Heart left ventricle (tissue), 16 donors: ENCODE measurements at regions of chr15 and their contacts with region 1.

Region 1: DNA sequence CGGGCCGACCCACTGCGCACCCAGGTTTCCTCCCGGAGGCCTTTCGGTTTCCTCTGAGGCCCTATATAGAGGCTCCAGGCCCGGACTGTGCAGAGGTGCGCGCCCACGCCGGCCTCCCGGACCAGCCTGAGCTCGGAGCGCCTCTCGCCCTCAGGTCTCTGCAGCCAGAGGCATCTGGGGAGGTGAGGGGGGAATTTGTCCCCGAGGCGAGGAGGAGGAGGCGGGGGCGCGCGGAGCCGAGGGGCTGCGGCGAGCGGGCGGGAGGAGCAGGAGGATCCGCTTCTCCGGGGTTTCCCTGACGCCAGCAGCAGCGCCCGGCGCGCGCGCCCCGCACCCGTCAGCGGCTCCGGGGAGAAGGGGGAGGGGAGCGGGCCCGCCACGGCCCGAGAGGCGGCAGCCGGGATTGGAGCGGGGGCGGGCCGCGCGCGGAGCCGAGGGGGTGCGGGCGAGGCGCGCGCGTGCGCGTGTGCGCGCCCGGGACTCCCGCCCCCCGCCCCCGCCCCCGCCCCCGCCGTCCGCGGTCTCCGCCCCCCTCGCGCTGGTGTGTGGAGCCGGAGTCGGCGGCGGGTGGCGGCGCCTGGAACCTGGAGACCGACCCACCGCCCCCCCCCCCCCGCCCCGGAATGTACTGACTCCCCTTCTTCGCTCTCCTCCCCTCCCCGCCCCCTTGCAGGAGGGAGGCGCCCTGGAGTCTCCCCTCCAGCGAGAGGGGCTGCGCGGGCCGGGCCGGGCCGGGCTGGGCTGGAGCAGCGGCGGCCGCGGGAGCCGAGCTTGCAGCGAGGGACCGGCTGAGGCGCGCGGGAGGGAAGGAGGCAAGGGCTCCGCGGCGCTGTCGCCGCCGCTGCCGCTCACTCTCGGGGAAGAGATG is at the start of gene NEO1:
- DNase-seq: peak; percentile 88 to 93 (median 88)
- ATAC-seq: peak; percentile 84 to 96 (median 96)
- H3K4me3 ChIP-seq: peak within 1 kb of the TSS; percentile 73 to 97 (median 82)
- H3K27ac ChIP-seq: peak within 1 kb of the TSS; percentile 74 to 97 (median 92)
- H3K4me1 ChIP-seq: peaks cover 0 to 19% (median 8%) of the 10 kb centered on the region in 12 donors
- H3K27me3 ChIP-seq: peaks cover 0 to 37% (median 0%) of the 10 kb centered on the region in 9 donors
- CTCF ChIP-seq: no peak
- POLR2A ChIP-seq: peak in 1 of 2 donors; percentile 45
- total RNA-seq, gene NEO1: 10.7 to 31.5 (median 13.5) TPM

Region 2: GRCh38 chr15:72783563-72784237 is 268.3 kb before region 1 on chr15 and contains the start of gene ADPGK:
- intact Hi-C with region 1: loop called in 2 of 10 experiments (anchors 2 to 10 kb)
- DNase-seq: peak; percentile 91 to 96 (median 92)
- ATAC-seq: peak; percentile 97 to 98 (median 98)
- H3K4me3 ChIP-seq: peak within 1 kb of the TSS; percentile 77 to 100 (median 90)
- H3K27ac ChIP-seq: peak within 1 kb of the TSS; percentile 78 to 98 (median 88)
- H3K4me1 ChIP-seq: peaks cover 0 to 40% (median 23%) of the 10 kb centered on the region in 12 donors
- H3K27me3 ChIP-seq: no peaks in the 10 kb centered on the region
- CTCF ChIP-seq: no peak
- POLR2A ChIP-seq: peak in 1 of 2 donors; percentile 87
- total RNA-seq, gene ADPGK: 7.1 to 31.7 (median 10.4) TPM

Region 3: GRCh38 chr15:72902245-72902918 is 149.7 kb before region 1 on chr15:
- intact Hi-C with region 1: loop called in 1 of 10 experiments (anchors 10 kb)
- DNase-seq: peak; percentile 62 to 86 (median 75)
- ATAC-seq: peak; percentile 88 to 97 (median 96)
- H3K4me3 ChIP-seq: no peak overlapping the region
- H3K27ac ChIP-seq: peak overlapping the region in 2 of 12 donors; percentile 16 to 19
- H3K4me1 ChIP-seq: peaks cover 0 to 26% (median 19%) of the 10 kb centered on the region in 12 donors
- H3K27me3 ChIP-seq: peaks cover 0 to 6% (median 0%) of the 10 kb centered on the region in 9 donors
- CTCF ChIP-seq: no peak
- POLR2A ChIP-seq: no peak

Region 4: GRCh38 chr15:72994534-72995177 is 57.4 kb before region 1 on chr15:
- intact Hi-C with region 1: no loop called
- DNase-seq: no peak
- ATAC-seq: peak in 1 of 4 donors; percentile 27
- H3K4me3 ChIP-seq: peak overlapping the region in 2 of 12 donors; percentile 9 to 15
- H3K27ac ChIP-seq: peak overlapping the region in 4 of 12 donors; percentile 19 to 44 (median 41)
- H3K4me1 ChIP-seq: peaks cover 0 to 16% (median 0%) of the 10 kb centered on the region in 12 donors
- H3K27me3 ChIP-seq: peaks cover 0 to 11% (median 0%) of the 10 kb centered on the region in 9 donors
- CTCF ChIP-seq: no peak
- POLR2A ChIP-seq: no peak